AG04449 (cell line): ENCODE measurements at regions of chrX and their contacts with region 1.

Region 1: DNA sequence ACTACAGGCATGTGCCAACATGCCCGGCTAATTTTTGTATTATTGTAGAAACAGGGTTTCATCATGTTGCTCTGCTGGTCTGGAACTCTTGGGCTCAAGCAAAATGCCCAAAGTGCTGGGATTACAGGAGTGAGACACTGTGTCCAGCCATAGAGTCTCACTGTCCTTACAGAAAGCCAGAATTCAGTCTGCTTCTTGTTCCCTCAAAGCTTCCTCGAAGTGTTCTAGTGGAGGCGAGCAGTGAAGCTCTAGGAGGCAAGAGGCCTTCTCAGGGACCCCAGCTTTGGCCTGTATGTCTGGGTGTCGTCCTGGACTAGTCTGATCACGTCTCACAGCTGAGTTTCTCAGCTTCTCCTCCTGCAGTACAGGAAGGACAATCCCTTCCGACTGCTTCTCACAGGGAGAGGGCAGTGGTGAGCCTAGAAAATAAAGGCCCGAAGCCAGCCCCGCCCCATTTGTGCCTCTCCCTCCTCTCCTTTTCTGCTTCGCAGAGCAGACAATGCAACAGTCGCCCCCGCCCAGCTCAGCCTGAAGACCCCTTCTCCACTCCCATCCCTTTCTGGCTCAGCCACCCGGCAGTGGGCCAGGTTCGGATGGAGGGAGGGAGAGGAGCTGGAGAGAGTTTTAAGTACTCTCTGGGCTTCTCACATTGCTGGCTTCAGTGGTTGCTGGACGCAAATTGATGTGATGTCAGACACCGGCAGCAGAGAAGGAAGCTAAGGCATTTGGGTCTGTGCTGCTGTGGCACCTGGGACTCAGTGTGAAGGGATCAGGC is 11.1 kb upstream of the FAM3A start:
- DNase-seq: no peak
- H3K4me3 ChIP-seq: peak overlapping the region; percentile 33
- CTCF ChIP-seq: peak; percentile 60

Region 2: GRCh38 chrX:154460326-154460725 is 66.8 kb before region 1 on chrX:
- CTCF ChIA-PET with region 1: no interaction called
- POLR2A ChIA-PET with region 1: no interaction called
- DNase-seq: no peak
- H3K4me3 ChIP-seq: peak overlapping the region; percentile 72
- CTCF ChIP-seq: no peak

Region 3: DNA sequence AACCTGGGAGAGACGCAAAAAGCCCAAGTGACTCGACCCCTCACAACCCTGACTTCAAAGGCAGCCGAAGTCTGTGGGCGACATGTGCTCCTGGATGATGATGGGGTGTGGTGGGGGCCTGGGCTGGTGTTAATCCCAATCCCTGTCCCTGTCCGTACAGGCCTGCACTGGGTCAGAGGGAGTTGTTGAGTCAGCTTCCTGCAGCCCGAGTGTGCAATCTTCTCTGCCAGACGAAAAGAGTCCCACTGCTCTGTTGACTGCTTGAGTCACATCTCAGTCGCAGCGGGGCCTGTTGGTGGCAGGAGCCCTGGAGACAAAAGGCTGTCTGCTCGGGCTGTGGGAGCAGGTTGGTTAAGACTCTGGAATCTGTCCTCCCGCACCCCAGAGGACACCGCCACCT is 21.4 kb before region 1 on chrX:
- CTCF ChIA-PET with region 1: no interaction called
- POLR2A ChIA-PET with region 1: no interaction called
- DNase-seq: no peak
- H3K4me3 ChIP-seq: no peak overlapping the region
- CTCF ChIP-seq: no peak

Region 4: GRCh38 chrX:154515878-154516655 is 11.0 kb before region 1 on chrX and contains the start of gene FAM3A:
- CTCF ChIA-PET with region 1: interaction called, 20 read pairs
- POLR2A ChIA-PET with region 1: interaction called, 5 read pairs
- DNase-seq: no peak
- H3K4me3 ChIP-seq: peak within 1 kb of the TSS; percentile 66
- CTCF ChIP-seq: no peak

Region 5: GRCh38 chrX:154541724-154542467 is 14.8 kb after region 1 on chrX:
- CTCF ChIA-PET with region 1: interaction called, 15 read pairs
- POLR2A ChIA-PET with region 1: interaction called, 3 read pairs
- DNase-seq: peak; percentile 72
- H3K4me3 ChIP-seq: no peak overlapping the region
- CTCF ChIP-seq: no peak